Posterior vena cava (tissue), 2 donors: ENCODE measurements at regions of chr2 and their contacts with region 1.

Region 1: GRCh38 chr2:1742681-1743395 is 1.5 kb downstream of the PXDN start:
- DNase-seq: peak; percentile 94

Region 2: GRCh38 chr2:1478311-1479305 is 264.2 kb before region 1 on chr2:
- intact Hi-C with region 1: loop called in 1 of 2 experiments (anchors 5 kb)
- DNase-seq: peak; percentile 67

Region 3: GRCh38 chr2:1591978-1592907 is 150.6 kb before region 1 on chr2:
- intact Hi-C with region 1: loop called (anchors 5 to 10 kb)
- DNase-seq: peak; percentile 92

Region 4: GRCh38 chr2:1653956-1654695 is 88.7 kb before region 1 on chr2:
- intact Hi-C with region 1: loop called in 1 of 2 experiments (anchors 10 kb)
- DNase-seq: no peak

Region 5: DNA sequence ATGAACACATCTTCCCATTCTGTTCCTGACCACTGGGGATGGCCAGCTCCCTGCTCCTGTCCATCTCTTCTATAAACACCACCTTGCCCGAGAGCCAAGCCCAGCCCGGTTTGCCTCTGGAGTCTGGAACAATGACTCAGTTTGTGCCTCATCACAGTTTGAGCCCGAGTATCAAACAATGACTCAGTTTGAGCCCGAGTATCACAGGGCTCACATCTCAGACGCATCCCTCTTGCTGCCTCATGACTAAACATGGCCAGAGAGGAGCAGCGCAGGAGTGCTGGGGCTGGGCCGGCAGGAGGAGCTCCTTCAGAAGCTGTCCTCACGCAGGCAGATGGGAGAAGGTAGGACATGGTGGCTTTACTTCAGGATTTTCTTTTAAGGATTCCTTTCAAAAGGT is 67.2 kb before region 1 on chr2:
- intact Hi-C with region 1: loop called (anchors 10 kb)
- DNase-seq: peak; percentile 92

Region 6: GRCh38 chr2:1817256-1818051 is 74.6 kb after region 1 on chr2:
- intact Hi-C with region 1: loop called in 1 of 2 experiments (anchors 5 kb)
- DNase-seq: peak; percentile 96

Region 7: DNA sequence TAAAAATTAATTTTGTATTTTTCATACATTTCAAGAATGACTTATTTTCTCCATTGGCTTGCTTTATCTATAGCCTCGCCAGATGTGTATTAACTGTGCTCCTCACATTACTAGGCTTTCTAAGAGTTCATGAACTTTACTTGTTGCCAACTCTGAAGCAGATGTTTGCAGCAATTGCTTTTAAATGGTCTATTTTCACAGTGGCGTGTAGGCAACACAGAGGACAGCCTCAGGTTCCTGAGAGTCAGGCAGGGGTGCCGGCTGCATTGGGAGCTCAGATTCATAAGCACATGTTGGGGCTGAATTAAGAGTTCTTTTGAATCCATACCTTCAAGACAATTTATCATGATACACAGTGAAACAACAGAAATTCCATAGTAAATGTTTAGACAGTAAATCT is 180.7 kb after region 1 on chr2:
- intact Hi-C with region 1: no loop called
- DNase-seq: no peak